ENCODE measurements at regions of chr19 and their contacts with region 1.

Region 1: GRCh38 chr19:47863514-47863936 is 4.5 kb downstream of the TPRX2 start:
- DNase-seq: peak; percentile 88 to 94
- H3K4me3 ChIP-seq: no peak overlapping the region
- H3K4me3 Mint-ChIP-seq: no peak overlapping the region
- H3K27ac Mint-ChIP-seq: no peak overlapping the region
- H3K4me1 ChIP-seq: no peaks in the 10 kb centered on the region
- H3K4me1 Mint-ChIP-seq: no peaks in the 10 kb centered on the region
- H3K27me3 ChIP-seq: no peaks in the 10 kb centered on the region
- H3K27me3 Mint-ChIP-seq: no peaks in the 10 kb centered on the region
- CTCF ChIP-seq: peak; percentile 96 to 98

Region 2: DNA sequence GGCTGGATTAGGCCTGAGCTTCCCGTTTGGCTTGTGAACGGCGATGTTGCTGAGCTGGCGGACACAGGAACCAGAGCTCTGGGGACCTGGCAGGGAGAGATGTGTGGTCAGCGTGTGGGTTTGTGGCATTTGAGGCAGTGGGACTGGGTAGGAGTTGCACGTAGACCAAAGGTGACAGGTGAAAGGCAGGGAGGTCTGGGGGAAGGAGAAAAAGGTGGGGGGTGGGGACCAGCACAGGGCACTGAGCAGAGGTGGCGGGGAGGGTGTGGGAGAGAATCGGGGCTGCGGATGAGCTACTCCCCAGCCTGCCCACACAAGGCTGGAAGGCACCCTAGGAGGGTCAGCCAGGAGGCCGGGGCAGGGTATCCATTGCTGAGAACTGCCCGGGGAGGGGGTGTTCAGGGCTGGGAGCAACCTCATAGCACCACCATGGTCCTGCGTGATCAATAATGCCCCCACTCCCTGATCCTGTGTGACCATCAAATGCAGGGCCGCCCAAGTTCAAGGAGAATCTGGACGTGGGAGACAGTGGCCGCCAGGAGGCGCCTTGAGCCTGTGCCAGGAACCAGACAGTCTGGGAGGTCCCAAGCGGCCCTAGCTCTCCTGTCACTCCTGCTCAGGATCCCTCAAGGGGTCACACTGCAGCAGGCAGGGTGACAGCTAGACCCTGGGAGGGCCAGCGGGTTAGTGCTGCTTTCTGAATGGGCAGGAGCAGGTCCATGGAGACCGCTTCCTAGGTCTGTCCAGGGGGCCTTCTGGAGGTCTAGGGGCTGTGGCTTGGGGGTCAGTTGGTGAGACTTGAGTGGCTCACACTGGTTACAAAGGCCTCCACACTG is 97.8 kb before region 1 on chr19:
- CTCF ChIA-PET with region 1: interaction called, 4 read pairs
- POLR2A ChIA-PET with region 1: no interaction called
- intact Hi-C with region 1: loop called (anchors 1 kb)
- DNase-seq: peak; percentile 70 to 71
- H3K4me3 ChIP-seq: no peak overlapping the region
- H3K4me3 Mint-ChIP-seq: no peak overlapping the region
- H3K27ac Mint-ChIP-seq: no peak overlapping the region
- H3K4me1 ChIP-seq: no peaks in the 10 kb centered on the region; the same call in 1 of the 2 replicates
- H3K4me1 Mint-ChIP-seq: no peaks in the 10 kb centered on the region
- H3K27me3 ChIP-seq: no peaks in the 10 kb centered on the region
- H3K27me3 Mint-ChIP-seq: peaks cover 2% of the 10 kb centered on the region
- CTCF ChIP-seq: peak; percentile 83 to 88

Region 3: GRCh38 chr19:47802521-47803043 is 60.9 kb before region 1 on chr19:
- CTCF ChIA-PET with region 1: no interaction called
- POLR2A ChIA-PET with region 1: no interaction called
- intact Hi-C with region 1: no loop called
- DNase-seq: no peak
- H3K4me3 ChIP-seq: no peak overlapping the region
- H3K4me3 Mint-ChIP-seq: no peak overlapping the region
- H3K27ac Mint-ChIP-seq: no peak overlapping the region
- H3K4me1 ChIP-seq: no peaks in the 10 kb centered on the region
- H3K4me1 Mint-ChIP-seq: no peaks in the 10 kb centered on the region
- H3K27me3 ChIP-seq: no peaks in the 10 kb centered on the region; the same call in 1 of the 2 replicates
- H3K27me3 Mint-ChIP-seq: no peaks in the 10 kb centered on the region
- CTCF ChIP-seq: no peak

Region 4: DNA sequence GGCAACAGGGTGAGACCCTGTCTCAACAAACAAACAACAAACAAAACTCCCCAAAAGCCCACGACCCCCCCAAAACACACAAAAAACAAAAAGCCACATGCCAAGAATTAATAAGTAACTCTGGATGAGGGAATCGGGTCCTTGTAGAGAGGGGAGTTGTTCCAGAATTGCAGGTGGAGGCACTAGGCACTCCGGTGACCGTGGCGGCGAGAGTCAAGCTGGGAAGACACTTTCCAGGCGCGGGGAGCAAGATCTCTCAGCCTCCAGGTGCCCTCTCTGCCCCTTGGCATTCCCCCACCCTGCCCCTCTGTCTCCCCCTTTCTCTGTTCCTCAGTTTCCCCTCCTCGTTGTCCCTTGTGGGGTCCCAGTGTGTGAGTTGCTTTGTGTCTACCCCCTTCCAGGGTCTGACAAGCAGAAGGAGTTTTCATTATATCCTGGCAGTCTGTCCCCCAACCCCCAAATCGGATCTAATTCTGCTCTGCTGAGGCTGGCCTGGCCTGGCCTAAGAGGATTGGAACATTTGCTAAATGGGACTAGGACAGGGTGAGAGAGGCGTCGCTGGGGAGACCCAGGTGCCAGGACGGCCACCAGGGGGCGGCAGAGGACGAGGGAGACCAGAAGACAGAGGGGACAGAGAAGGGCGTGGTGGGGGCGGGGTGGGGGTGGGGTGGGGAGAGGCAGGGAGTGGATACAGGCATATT is 50.1 kb before region 1 on chr19:
- CTCF ChIA-PET with region 1: interaction called, 4 read pairs
- POLR2A ChIA-PET with region 1: no interaction called
- intact Hi-C with region 1: loop called (anchors 1 kb)
- DNase-seq: peak; percentile 85 to 92
- H3K4me3 ChIP-seq: no peak overlapping the region
- H3K4me3 Mint-ChIP-seq: no peak overlapping the region
- H3K27ac Mint-ChIP-seq: no peak overlapping the region
- H3K4me1 ChIP-seq: no peaks in the 10 kb centered on the region
- H3K4me1 Mint-ChIP-seq: no peaks in the 10 kb centered on the region
- H3K27me3 ChIP-seq: no peaks in the 10 kb centered on the region
- H3K27me3 Mint-ChIP-seq: no peaks in the 10 kb centered on the region
- CTCF ChIP-seq: peak; percentile 81 to 86

Region 5: DNA sequence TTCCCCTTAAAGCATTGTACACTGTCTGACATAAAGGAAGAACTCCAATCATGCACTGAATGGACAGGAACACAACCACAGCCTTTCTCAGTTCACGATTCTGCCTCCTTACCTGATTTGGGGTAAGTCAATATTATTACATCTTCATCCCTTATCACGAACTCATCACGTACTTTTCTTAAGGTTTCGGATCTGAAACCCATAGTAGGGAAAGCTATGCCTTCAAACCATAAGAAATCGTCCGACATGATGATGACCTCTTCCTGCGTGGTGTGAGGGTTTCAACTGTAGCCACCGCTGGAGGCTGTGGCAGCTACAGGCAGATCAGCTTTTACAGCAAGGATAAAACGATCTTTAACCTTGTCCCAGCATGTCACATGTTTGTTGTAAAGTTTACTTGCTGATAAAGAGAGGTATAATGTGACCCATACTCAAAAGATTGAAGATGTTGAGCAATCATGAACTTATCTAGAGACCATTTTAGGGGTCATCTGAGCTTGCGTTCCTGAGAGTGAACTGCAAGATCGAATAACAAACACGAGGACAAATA is 22.6 kb after region 1 on chr19 and contains the start of gene SULT2A1:
- CTCF ChIA-PET with region 1: interaction called, 10 read pairs
- POLR2A ChIA-PET with region 1: no interaction called
- intact Hi-C with region 1: loop called (anchors 2 kb)
- DNase-seq: peak; percentile 50 to 54
- H3K4me3 ChIP-seq: peak within 1 kb of the TSS; percentile 24
- H3K4me3 Mint-ChIP-seq: peak within 1 kb of the TSS; percentile 62
- H3K27ac Mint-ChIP-seq: peak within 1 kb of the TSS; percentile 14
- H3K4me1 ChIP-seq: peaks cover 14% of the 10 kb centered on the region
- H3K4me1 Mint-ChIP-seq: peaks cover 22% of the 10 kb centered on the region
- H3K27me3 ChIP-seq: no peaks in the 10 kb centered on the region
- H3K27me3 Mint-ChIP-seq: no peaks in the 10 kb centered on the region
- CTCF ChIP-seq: peak in 1 of 2 experiments; percentile 5
- total RNA-seq, gene SULT2A1: 4.5 TPM in 2 replicates

Measured in Caco-2 (cell line).